Uterus (tissue), 4 donors: ENCODE measurements at regions of chr6 and their contacts with region 1.

Region 1: DNA sequence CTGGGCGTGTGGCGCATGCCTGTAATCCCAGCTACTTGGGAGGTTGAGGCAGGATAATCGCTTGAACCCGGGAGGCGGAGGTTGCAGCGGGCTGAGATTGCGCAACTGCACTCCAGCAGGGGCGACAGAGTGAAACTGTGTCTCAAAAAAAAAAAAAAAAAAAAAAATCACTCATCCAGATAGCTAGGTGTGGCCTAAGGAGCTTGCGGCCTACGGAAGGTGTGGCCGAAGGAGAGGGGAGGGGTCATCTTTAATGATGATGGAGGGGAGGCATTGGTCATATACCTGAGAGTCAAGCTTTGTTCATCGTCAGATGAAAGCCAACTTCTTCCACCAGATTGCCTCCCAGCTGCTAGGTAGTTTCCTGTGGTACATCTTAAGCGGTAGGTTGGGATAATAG is 801 bp upstream of the PPARD start:
- DNase-seq: no peak
- H3K4me3 ChIP-seq: no peak overlapping the region
- H3K27ac ChIP-seq: no peak overlapping the region
- H3K4me1 ChIP-seq: no peaks in the 10 kb centered on the region
- H3K27me3 ChIP-seq: no peaks in the 10 kb centered on the region
- CTCF ChIP-seq: no peak
- POLR2A ChIP-seq: no peak

Region 2: DNA sequence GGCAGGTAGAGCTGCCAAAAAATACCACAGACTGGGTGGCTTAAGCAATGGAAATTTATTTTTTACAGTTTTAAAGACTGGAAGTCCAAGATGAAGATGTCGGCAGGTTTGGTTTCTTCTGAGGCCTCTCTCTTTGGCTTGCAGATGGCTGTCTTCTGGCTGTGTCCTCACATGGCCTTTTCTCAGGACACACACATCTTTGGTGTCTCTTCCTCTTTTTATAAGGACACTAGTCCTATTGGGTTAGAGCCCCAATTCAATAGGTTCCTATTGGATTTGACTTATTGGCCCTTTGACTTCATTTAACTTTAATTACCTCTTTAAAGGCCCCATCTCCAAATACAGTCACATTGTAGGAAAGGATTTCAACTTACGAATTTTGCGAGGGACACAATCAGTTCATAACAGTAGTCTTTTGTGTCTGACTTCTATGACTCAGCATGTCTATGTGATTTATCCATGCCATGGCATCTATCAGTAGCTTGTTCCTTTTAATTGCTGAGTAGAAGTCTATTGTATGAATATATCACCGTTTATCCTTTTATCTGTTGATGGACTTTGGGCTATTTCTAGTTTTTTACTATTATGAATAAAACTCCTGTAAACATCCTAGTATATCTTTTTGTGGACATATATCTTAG is 189.4 kb before region 1 on chr6:
- intact Hi-C with region 1: no loop called
- DNase-seq: no peak
- H3K4me3 ChIP-seq: no peak overlapping the region
- H3K27ac ChIP-seq: no peak overlapping the region
- H3K4me1 ChIP-seq: no peaks in the 10 kb centered on the region
- H3K27me3 ChIP-seq: no peaks in the 10 kb centered on the region
- CTCF ChIP-seq: no peak
- POLR2A ChIP-seq: no peak

Region 3: GRCh38 chr6:35173427-35174087 is 168.0 kb before region 1 on chr6:
- intact Hi-C with region 1: no loop called
- DNase-seq: no peak
- H3K4me3 ChIP-seq: no peak overlapping the region
- H3K27ac ChIP-seq: no peak overlapping the region
- H3K4me1 ChIP-seq: no peaks in the 10 kb centered on the region
- H3K27me3 ChIP-seq: no peaks in the 10 kb centered on the region
- CTCF ChIP-seq: no peak
- POLR2A ChIP-seq: no peak

Region 4: GRCh38 chr6:35419417-35419816 is 77.9 kb after region 1 on chr6:
- intact Hi-C with region 1: no loop called
- DNase-seq: no peak
- H3K4me3 ChIP-seq: no peak overlapping the region
- H3K27ac ChIP-seq: no peak overlapping the region
- H3K4me1 ChIP-seq: no peaks in the 10 kb centered on the region
- H3K27me3 ChIP-seq: no peaks in the 10 kb centered on the region
- CTCF ChIP-seq: no peak
- POLR2A ChIP-seq: no peak

Region 5: DNA sequence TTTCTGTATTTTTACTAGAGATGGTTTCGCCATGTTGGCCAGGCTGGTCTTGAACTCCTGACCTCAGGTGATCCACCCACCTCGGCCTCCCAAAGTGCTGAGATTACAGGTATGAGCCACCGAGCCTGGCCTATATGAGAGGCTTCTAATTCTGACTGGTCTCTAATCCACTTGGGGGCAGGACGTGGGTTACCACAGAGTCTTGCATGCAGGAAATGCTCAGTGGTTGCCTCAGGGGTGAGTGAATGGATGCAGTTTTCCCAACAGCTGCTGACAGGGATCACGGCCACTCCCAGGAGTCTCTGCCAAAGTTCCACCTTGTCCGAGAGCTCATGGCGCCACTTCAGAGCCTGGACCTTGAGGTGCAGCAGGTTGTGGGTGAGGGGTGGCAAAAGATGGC is 104.1 kb after region 1 on chr6:
- intact Hi-C with region 1: loop called (anchors 2 kb)
- DNase-seq: no peak
- H3K4me3 ChIP-seq: no peak overlapping the region
- H3K27ac ChIP-seq: no peak overlapping the region
- H3K4me1 ChIP-seq: no peaks in the 10 kb centered on the region
- H3K27me3 ChIP-seq: no peaks in the 10 kb centered on the region
- CTCF ChIP-seq: no peak
- POLR2A ChIP-seq: no peak